ENCODE measurements at regions of chr10 and their contacts with region 1.

Region 1: GRCh38 chr10:20466731-20467130 is 430.4 kb downstream of the NEBL start:
- DNase-seq: no peak
- ATAC-seq: peak in 1 of 8 donors; percentile 59
- H3K4me3 ChIP-seq: no peak overlapping the region
- H3K27ac ChIP-seq: no peak overlapping the region
- H3K4me1 ChIP-seq: no peaks in the 10 kb centered on the region
- H3K27me3 ChIP-seq: no peaks in the 10 kb centered on the region
- CTCF ChIP-seq: no peak

Region 2: GRCh38 chr10:20288060-20288459 is 178.7 kb before region 1 on chr10:
- intact Hi-C with region 1: loop called in 1 of 10 experiments (anchors 5 kb)
- DNase-seq: no peak
- ATAC-seq: no peak
- H3K4me3 ChIP-seq: no peak overlapping the region
- H3K27ac ChIP-seq: no peak overlapping the region
- H3K4me1 ChIP-seq: peaks cover 0 to 14% (median 4%) of the 10 kb centered on the region in 9 donors
- H3K27me3 ChIP-seq: no peaks in the 10 kb centered on the region
- CTCF ChIP-seq: no peak

Region 3: DNA sequence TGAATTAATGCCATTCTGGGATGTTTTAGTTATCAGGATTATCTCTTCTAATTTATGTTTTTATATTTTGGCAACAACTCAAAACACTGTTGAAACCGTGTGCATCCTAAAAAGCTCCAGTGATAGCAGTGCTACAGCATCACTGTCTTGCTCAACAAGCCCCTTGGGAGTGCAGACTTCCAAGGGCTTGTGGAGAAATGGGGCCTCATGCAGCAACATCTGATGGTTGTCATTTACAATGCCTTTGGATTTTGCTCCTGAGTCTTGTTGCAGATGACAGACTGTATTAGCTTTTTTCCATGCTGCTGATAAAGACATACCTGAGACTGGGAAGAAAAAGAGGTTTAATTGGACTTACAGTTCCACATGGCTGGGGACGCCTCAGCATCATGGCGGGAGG is 85.0 kb before region 1 on chr10:
- intact Hi-C with region 1: no loop called
- DNase-seq: no peak
- ATAC-seq: no peak
- H3K4me3 ChIP-seq: no peak overlapping the region
- H3K27ac ChIP-seq: no peak overlapping the region
- H3K4me1 ChIP-seq: no peaks in the 10 kb centered on the region
- H3K27me3 ChIP-seq: no peaks in the 10 kb centered on the region
- CTCF ChIP-seq: no peak

Measured in heart right ventricle (tissue), 16 donors.